Activated T-helper 1 cell treated with anti-CD3 and anti-CD28 coated beads, Interleukin-12 subunit alpha, Interleukin-12 subunit beta, Interleukin-2, Interleukin-4 antibody, amounts not matched to agents 30 ng/mL and 10 ng/mL and 1 ng/mL, durations not matched to agents 14 hours and 24 hours and 36 hours (primary cell): ENCODE measurements at regions of chr15 and their contacts with region 1.

Region 1: GRCh38 chr15:31365655-31366127 is 39.1 kb downstream of the KLF13 start:
- DNase-seq: peak; percentile 69
- H3K4me3 Mint-ChIP-seq: peak overlapping the region; percentile 77
- H3K27ac Mint-ChIP-seq: peak overlapping the region; percentile 99
- H3K4me1 Mint-ChIP-seq: peaks cover 97% of the 10 kb centered on the region
- H3K27me3 Mint-ChIP-seq: no peaks in the 10 kb centered on the region

Region 2: GRCh38 chr15:31215490-31216214 is 150.0 kb before region 1 on chr15:
- intact Hi-C with region 1: loop called (anchors 1 kb)
- DNase-seq: peak; percentile 76
- H3K4me3 Mint-ChIP-seq: peak overlapping the region; percentile 79
- H3K27ac Mint-ChIP-seq: peak overlapping the region; percentile 73
- H3K4me1 Mint-ChIP-seq: peaks cover 48% of the 10 kb centered on the region
- H3K27me3 Mint-ChIP-seq: no peaks in the 10 kb centered on the region

Region 3: DNA sequence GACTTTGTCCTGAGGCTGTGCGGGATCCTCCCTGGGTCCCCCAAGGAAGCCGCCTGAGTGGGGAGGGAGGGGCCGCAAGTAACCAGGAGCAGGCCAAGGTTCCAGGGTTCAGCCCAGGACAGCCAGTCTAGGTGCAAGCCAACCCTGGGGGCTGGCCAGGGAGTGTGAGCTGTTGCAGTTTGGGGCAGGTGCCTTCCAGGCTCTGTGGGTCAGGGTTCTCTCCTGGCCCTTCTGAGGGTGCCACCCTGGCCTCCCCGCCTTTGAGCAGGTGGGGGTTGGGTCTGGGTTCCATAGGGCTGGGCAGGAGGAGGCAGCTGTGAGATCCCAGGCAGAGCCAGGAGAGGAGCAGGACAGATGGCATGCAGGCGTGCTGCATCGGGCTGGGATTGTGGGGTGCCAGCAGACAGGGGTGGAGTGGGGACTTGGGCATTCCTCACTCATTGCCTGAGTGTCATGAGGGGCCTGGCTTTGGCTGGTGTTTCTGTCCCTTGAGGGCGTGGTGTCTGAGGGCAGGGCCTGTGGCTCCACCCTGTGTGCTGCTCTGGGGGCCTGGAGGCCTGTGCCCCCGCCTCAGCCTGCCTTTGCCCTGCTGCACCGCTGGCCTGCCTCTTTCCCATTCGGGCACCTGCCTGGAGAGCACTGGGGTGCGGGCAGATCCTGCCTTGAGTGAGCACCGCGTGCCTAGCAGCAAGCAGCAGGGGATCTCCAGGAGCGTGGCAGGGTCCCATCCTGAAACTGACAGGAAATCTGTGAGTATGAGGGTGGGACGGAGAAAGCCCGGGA is 20.7 kb before region 1 on chr15:
- intact Hi-C with region 1: loop called (anchors 1 kb)
- DNase-seq: no peak
- H3K4me3 Mint-ChIP-seq: peak overlapping the region; percentile 89
- H3K27ac Mint-ChIP-seq: peak overlapping the region; percentile 99
- H3K4me1 Mint-ChIP-seq: peaks cover 94% of the 10 kb centered on the region
- H3K27me3 Mint-ChIP-seq: no peaks in the 10 kb centered on the region

Region 4: GRCh38 chr15:31352911-31353811 is 12.5 kb before region 1 on chr15:
- intact Hi-C with region 1: loop called (anchors 1 kb)
- DNase-seq: peak; percentile 29
- H3K4me3 Mint-ChIP-seq: peak overlapping the region; percentile 80
- H3K27ac Mint-ChIP-seq: peak overlapping the region; percentile 89
- H3K4me1 Mint-ChIP-seq: peaks cover 92% of the 10 kb centered on the region
- H3K27me3 Mint-ChIP-seq: no peaks in the 10 kb centered on the region

Region 5: DNA sequence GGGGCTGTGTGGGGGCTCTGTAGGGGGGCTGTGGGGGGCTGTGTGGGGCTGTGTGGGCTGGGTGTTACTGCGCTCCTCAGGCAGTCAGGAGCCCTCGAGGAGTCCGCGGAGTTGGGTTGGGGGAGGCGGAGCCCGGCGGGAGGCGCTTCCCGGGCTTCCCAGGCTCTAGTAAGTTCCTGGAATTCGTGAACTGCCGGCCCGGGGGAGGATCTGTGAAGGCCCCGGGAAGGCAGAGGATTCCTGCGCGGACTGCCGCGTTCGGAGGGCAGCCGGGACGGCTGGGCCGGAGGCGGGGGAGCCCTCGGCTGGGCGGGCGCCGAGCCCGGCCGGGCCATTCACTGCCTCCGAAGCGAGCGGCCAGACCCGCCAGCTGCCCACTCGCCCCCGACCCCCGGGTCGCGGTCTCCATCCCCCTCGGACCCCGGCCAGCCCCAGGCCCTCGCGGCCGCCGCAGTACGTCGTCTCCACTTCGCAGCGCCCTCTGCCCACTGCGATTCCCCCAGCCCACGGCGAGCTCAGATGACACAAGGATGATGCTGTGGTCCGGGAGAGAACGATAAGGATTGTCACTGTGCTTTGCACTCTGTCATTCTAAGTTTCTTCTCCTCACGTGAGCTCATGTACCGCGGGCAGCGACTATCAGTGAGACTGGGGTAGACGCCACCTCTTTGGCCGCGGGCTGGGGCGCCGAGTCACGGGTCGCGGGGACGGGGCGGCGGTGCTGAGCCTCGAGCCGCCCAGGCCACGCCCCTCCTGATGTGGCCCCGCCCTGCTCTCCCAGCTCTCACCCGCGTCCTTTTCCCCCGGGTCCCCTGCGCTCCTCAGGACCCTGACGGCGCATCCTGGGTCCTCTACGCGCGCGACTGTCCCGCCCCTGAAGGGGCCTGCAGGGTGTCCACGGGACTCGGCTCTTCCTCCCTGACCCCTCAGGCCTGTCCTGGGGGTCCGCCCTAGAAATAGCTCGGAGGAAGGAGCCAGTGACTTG is 26.3 kb after region 1 on chr15:
- intact Hi-C with region 1: loop called (anchors 1 kb)
- DNase-seq: peak; percentile 78
- H3K4me3 Mint-ChIP-seq: peak overlapping the region; percentile 86
- H3K27ac Mint-ChIP-seq: peak overlapping the region; percentile 90
- H3K4me1 Mint-ChIP-seq: peaks cover 37% of the 10 kb centered on the region
- H3K27me3 Mint-ChIP-seq: no peaks in the 10 kb centered on the region

Region 6: GRCh38 chr15:31483053-31483985 is 117.6 kb after region 1 on chr15:
- intact Hi-C with region 1: loop called (anchors 1 kb)
- DNase-seq: peak; percentile 42
- H3K4me3 Mint-ChIP-seq: peak overlapping the region; percentile 92
- H3K27ac Mint-ChIP-seq: peak overlapping the region; percentile 99
- H3K4me1 Mint-ChIP-seq: peaks cover 64% of the 10 kb centered on the region
- H3K27me3 Mint-ChIP-seq: peaks cover 2% of the 10 kb centered on the region

Region 7: DNA sequence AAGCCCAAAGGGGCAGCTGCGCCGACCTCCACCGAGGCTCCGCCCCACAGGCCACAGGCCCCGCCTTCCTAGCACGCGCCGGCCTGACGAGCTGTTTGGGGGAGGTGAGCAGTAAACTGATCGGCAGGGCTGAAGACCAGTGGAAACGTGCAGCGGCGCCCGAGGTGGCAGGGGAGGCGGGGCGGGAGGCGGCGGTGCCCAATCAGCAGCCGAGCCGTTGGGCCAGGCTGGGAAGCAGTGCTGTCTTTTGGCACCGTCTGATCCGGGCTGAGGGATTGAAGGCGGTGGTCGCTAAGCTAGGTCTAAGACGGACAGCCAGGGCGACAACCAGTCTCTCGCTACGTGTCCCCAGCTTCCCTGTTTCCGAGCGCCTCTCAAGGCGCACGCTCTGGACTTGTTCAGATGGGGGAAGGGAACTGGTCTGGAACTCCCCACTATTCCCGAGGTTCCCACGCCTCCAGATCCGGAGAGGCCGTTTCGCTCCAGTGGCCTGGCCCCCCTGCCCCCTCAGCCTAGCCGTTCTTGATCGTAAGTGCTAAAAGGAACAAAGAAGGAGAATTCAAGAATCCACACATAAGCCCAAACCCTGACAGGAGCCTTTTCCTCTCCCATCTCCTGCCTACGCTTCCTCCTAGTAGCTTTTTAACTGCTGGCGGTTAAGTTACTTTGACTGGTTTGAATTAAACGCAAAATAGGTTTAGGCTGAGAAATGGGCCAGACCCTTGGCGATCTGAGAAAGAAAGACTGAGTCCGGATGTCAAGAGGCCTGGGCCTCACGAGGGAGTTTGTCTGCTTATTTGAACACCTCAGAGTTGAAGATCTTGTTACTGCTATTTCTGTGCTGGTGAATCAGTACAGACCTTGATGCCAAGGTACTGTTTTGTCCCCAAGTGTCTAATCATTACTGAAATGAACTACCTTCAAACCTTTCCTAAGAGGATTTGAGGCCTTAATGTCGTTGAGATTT is 1829.3 kb after region 1 on chr15 and contains the start of gene FMN1:
- intact Hi-C with region 1: loop called (anchors 10 kb)
- DNase-seq: peak; percentile 85
- H3K4me3 Mint-ChIP-seq: peak within 1 kb of the TSS; percentile 81
- H3K27ac Mint-ChIP-seq: peak within 1 kb of the TSS; percentile 38
- H3K4me1 Mint-ChIP-seq: peaks cover 19% of the 10 kb centered on the region
- H3K27me3 Mint-ChIP-seq: peaks cover 36% of the 10 kb centered on the region
- total RNA-seq, gene FMN1: 0.03 TPM in 1 of 2 replicates, not detected in the other